Sciatic nerve (tissue), 2 donors: ENCODE measurements at regions of chr11 and their contacts with region 1.

Region 1: GRCh38 chr11:119108146-119108856 is 1.2 kb downstream of the C2CD2L start:
- DNase-seq: no peak
- ATAC-seq: no peak

Region 2: GRCh38 chr11:117519170-117519569 is 1589.1 kb before region 1 on chr11:
- intact Hi-C with region 1: no loop called
- DNase-seq: no peak
- ATAC-seq: no peak

Region 3: GRCh38 chr11:119168471-119169281 is 60.4 kb after region 1 on chr11 and contains the start of gene NLRX1:
- intact Hi-C with region 1: loop called (anchors 2 kb)
- DNase-seq: peak; percentile 87
- ATAC-seq: peak; percentile 95
- total RNA-seq, gene NLRX1: 13.9 TPM